ENCODE measurements at regions of chr2 and their contacts with region 1.

Region 1: GRCh38 chr2:85066874-85067351 is 66.3 kb upstream of the TCF7L1 start:
- DNase-seq: peak; percentile 62 to 73
- ATAC-seq: peak; percentile 70

Region 2: GRCh38 chr2:85288244-85288725 is 221.4 kb after region 1 on chr2:
- intact Hi-C with region 1: loop called in 1 of 2 experiments (anchors 10 kb)
- DNase-seq: peak; percentile 51 to 53
- ATAC-seq: peak; percentile 88

Region 3: DNA sequence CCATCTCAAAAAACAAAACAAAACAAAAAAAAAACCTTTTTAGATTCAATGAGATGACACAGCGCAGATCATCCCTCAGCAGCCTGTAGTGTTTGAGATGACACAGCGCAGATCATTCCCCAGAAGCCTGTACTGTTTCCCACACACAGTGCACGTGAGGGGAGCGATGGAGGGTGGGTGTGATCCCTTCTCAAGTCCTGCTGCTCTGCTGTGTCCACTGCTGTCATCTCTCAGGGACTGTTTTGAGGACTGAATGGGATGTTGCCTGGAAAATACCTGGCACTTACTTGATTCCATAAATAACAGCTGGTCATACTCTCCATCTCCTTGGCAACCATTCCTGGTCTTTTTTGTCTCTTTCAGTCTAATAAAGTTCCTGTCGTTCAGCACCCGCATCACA is 235.2 kb after region 1 on chr2:
- intact Hi-C with region 1: loop called in 1 of 2 experiments (anchors 5 kb)
- DNase-seq: no peak
- ATAC-seq: no peak

Measured in left colon (tissue), 2 donors.